ENCODE measurements at regions of chr22 and their contacts with region 1.

Region 1: GRCh38 chr22:27405672-27406388 is 395.7 kb downstream of the MN1 start:
- DNase-seq: peak; percentile 49 to 74
- H3K4me3 ChIP-seq: no peak overlapping the region
- H3K27ac ChIP-seq: no peak overlapping the region
- H3K4me1 ChIP-seq: no peaks in the 10 kb centered on the region
- H3K27me3 ChIP-seq: no peaks in the 10 kb centered on the region
- CTCF ChIP-seq: peak; percentile 61 to 79

Region 2: DNA sequence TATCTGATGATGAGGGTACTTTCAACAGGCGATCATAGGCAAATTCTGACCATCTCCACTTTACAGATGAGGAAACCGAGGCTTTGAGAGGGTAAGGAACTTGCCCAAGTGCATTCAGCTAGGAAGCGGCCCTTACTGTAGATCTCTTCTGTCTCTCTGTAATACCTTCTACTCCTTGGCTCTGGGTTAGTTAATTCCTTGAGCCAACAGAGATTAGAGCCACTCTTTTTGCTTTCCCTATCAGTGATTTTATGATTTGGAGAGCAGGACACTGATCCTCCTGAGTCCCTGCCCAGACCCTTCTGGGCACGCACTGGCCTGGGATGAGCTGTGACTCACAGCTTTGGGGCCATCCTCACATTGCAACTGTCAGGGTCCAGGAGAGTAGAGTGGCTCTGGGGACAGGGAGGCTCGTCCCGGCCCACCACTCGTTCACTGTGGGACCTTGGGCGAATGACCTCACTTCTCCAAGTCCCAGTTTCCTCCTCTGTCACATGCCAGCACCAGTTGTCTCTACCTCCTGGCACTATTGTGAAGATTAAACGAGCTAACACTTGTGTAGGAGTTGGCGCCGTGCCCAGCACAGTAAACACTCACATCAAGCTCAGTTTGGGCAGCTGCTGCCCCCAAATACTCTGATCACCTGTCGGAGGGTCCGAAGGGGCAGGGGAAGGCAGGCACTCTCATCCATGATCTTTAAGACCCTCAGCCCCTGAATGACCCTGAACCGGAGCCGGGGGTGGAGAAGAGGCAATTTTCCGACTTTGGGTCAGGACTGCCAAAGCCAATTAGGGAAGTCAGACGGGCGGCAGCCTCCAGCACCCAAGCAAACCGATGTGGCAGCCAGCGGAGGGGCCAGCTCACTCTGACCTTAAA is 513.4 kb before region 1 on chr22:
- intact Hi-C with region 1: no loop called
- DNase-seq: no peak
- H3K4me3 ChIP-seq: no peak overlapping the region
- H3K27ac ChIP-seq: peak overlapping the region; percentile 80 to 87
- H3K4me1 ChIP-seq: peaks cover 0 to 91% (median 47%) of the 10 kb centered on the region in 4 donors
- H3K27me3 ChIP-seq: no peaks in the 10 kb centered on the region
- CTCF ChIP-seq: no peak

Region 3: DNA sequence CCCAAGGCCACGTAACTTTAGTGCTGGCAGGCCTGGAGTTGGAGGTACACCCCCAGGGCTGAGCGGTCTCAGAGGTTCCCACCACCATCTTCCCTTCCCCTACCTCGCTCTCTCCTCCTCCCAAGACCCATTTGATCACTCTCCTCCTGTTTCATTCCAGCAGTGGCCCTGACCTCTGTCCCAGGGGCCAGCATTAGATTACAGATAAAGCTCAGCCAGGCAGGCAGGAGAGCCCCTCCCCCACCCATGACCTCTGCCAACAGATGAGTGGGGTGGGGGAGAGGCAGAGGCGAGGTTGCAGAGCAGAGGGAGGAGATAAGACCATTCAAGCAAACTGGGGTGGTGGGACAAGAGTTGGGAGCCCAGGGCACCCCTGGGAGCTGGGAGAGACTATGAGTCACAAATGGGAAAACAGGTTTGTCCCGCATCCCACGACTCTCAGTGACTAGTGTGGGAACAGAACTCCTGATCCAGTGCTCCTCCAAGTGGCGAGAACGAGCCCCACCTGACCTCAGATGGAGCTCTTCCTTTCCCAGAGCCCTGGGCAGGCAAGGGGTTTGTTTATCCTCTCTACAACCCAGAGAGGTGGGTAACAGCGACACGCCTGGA is 27.9 kb after region 1 on chr22:
- intact Hi-C with region 1: loop called (anchors 1 kb)
- DNase-seq: no peak
- H3K4me3 ChIP-seq: no peak overlapping the region
- H3K27ac ChIP-seq: no peak overlapping the region
- H3K4me1 ChIP-seq: peaks cover 0 to 11% (median 8%) of the 10 kb centered on the region in 4 donors
- H3K27me3 ChIP-seq: no peaks in the 10 kb centered on the region
- CTCF ChIP-seq: no peak

Region 4: GRCh38 chr22:27632451-27633295 is 226.8 kb after region 1 on chr22:
- intact Hi-C with region 1: loop called (anchors 10 kb)
- DNase-seq: no peak
- H3K4me3 ChIP-seq: no peak overlapping the region
- H3K27ac ChIP-seq: no peak overlapping the region
- H3K4me1 ChIP-seq: peaks cover 0 to 20% (median 15%) of the 10 kb centered on the region in 4 donors
- H3K27me3 ChIP-seq: no peaks in the 10 kb centered on the region
- CTCF ChIP-seq: no peak

Region 5: GRCh38 chr22:28009272-28009827 is 603.5 kb after region 1 on chr22:
- intact Hi-C with region 1: loop called (anchors 10 kb)
- DNase-seq: peak; percentile 54 to 80
- H3K4me3 ChIP-seq: no peak overlapping the region
- H3K27ac ChIP-seq: peak overlapping the region in 1 of 2 donors; percentile 12
- H3K4me1 ChIP-seq: peaks cover 0 to 7% (median 4%) of the 10 kb centered on the region in 4 donors
- H3K27me3 ChIP-seq: no peaks in the 10 kb centered on the region
- CTCF ChIP-seq: peak; percentile 95 to 97

Measured in tibial artery (tissue), 4 donors.